ENCODE measurements at regions of chr11 and their contacts with region 1.

Region 1: GRCh38 chr11:111586388-111586831 is 15.8 kb upstream of the SIK2 start:
- DNase-seq: peak; percentile 54
- ATAC-seq: peak; percentile 72
- H3K4me3 Mint-ChIP-seq: no peak overlapping the region
- H3K27ac Mint-ChIP-seq: no peak overlapping the region
- H3K4me1 Mint-ChIP-seq: peaks cover 8% of the 10 kb centered on the region
- H3K27me3 Mint-ChIP-seq: no peaks in the 10 kb centered on the region

Region 2: GRCh38 chr11:111707039-111707690 is 120.8 kb after region 1 on chr11:
- CTCF ChIA-PET with region 1: no interaction called
- DNase-seq: no peak
- ATAC-seq: no peak
- H3K4me3 Mint-ChIP-seq: no peak overlapping the region
- H3K27ac Mint-ChIP-seq: no peak overlapping the region
- H3K4me1 Mint-ChIP-seq: no peaks in the 10 kb centered on the region
- H3K27me3 Mint-ChIP-seq: no peaks in the 10 kb centered on the region

Region 3: DNA sequence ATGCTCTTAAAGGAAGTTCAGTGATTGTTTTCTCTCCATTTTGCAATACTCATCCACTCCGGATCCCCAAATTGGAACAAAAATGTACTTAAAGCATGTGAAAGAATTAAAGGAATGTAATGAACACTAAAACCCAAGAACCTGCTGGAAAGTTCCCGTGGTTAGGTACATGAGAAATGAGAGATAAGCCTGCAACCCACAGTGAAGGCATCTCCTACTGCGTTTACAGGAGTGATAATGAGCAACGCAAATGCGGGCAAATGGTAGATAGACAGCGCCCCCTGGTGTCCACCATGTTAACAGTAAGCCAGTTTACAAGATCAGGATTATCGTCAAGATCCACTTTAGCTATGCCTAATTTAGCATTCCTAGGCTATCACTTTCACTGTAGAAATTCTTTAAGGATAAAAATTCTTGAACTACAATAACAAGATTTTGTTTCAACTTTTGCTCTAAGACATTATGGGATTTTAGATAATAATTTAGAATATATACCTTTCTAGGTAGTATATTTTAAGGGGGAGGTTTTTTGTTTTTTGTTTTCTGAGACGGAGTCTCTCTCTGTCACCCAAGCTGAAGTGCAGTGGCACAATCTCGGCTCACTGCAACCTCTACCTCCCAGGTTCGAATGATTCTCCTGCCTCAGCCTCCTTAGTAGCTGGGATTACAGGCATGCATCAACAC is 255.1 kb after region 1 on chr11:
- CTCF ChIA-PET with region 1: interaction called, 21 read pairs
- DNase-seq: peak; percentile 89
- ATAC-seq: peak; percentile 97
- H3K4me3 Mint-ChIP-seq: no peak overlapping the region
- H3K27ac Mint-ChIP-seq: no peak overlapping the region
- H3K4me1 Mint-ChIP-seq: peaks cover 12% of the 10 kb centered on the region
- H3K27me3 Mint-ChIP-seq: no peaks in the 10 kb centered on the region